Body of pancreas (tissue), 4 donors: ENCODE measurements at regions of chr9 and their contacts with region 1.

Region 1: GRCh38 chr9:114291064-114291474 is 31.8 kb upstream of the ORM1 start:
- DNase-seq: peak; percentile 70 to 81 (median 75)
- ATAC-seq: peak; percentile 62
- H3K4me3 ChIP-seq: no peak overlapping the region
- H3K27ac ChIP-seq: no peak overlapping the region
- H3K4me1 ChIP-seq: peaks cover 8% of the 10 kb centered on the region
- H3K27me3 ChIP-seq: no peaks in the 10 kb centered on the region
- CTCF ChIP-seq: peak; percentile 77 to 87 (median 84)
- POLR2A ChIP-seq: no peak

Region 2: GRCh38 chr9:114108016-114108833 is 182.8 kb before region 1 on chr9:
- intact Hi-C with region 1: loop called (anchors 5 kb)
- DNase-seq: peak; percentile 83 to 89 (median 88)
- ATAC-seq: peak; percentile 98
- H3K4me3 ChIP-seq: no peak overlapping the region
- H3K27ac ChIP-seq: no peak overlapping the region
- H3K4me1 ChIP-seq: peaks cover 7% of the 10 kb centered on the region
- H3K27me3 ChIP-seq: no peaks in the 10 kb centered on the region
- CTCF ChIP-seq: peak; percentile 94 to 99 (median 99)
- POLR2A ChIP-seq: no peak